ENCODE measurements at regions of chr15 and their contacts with region 1.

Region 1: DNA sequence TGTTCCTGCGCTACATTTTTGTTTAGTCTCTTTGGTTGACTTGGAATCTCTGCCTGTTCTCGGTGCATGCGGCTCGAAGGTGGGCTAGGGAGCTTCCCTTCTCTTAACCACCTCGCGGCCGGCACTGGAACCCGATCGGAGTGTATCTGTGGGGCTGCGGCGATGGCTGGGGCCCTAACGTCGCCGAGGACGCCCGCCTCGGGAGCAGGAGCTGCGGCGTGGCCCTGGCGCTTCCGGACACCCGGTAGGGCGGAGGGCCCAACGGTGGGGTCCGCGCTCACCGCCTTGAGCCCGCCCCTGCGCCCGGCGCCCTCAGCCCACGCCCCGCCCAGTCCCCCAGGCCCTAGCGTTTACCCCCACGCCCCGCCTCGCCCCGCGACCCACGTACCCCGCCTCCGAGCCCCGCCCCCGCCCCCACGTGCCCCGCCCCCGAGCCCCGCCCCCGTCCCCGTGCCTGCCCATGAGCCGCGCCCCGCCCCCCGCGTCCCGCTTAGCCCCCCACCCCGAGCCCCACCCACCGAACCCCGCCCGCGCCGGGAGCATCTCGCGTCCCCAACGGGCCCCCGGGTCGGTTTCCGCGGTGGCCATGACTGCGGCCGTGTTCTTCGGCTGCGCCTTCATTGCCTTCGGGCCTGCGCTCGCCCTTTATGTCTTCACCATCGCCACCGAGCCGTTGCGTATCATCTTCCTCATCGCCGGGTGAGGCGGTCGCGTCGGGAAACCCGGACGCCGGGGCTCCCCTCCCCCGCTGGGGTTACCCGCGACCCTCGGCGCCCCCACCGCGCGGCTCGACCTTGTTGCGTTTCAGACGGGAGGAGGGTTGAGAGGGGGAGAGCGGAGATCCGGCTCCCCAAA is at the start of gene APH1B:
- DNase-seq: peak; percentile 62 to 80 (median 74)
- ATAC-seq: peak; percentile 92
- H3K4me3 ChIP-seq: peak within 1 kb of the TSS; percentile 71
- H3K4me3 Mint-ChIP-seq: peak within 1 kb of the TSS; percentile 78 to 93 (median 89)
- H3K27ac ChIP-seq: peak within 1 kb of the TSS; percentile 96
- H3K27ac Mint-ChIP-seq: peak within 1 kb of the TSS; percentile 75 to 98 (median 86)
- H3K4me1 ChIP-seq: peaks cover 10 to 21% of the 10 kb centered on the region in 2 donors
- H3K4me1 Mint-ChIP-seq: peaks cover 23 to 49% (median 46%) of the 10 kb centered on the region in 7 donors
- H3K27me3 ChIP-seq: no peaks in the 10 kb centered on the region
- H3K27me3 Mint-ChIP-seq: no peaks in the 10 kb centered on the region
- total RNA-seq, gene APH1B: 9.9 to 29.9 (median 17.6) TPM

Region 2: GRCh38 chr15:62647202-62647865 is 629.9 kb before region 1 on chr15:
- CTCF ChIA-PET with region 1: no interaction called
- POLR2A ChIA-PET with region 1: no interaction called
- intact Hi-C with region 1: no loop called
- DNase-seq: no peak
- ATAC-seq: peak; percentile 49
- H3K4me3 ChIP-seq: no peak overlapping the region
- H3K4me3 Mint-ChIP-seq: no peak overlapping the region
- H3K27ac ChIP-seq: no peak overlapping the region
- H3K27ac Mint-ChIP-seq: peak overlapping the region in 1 of 9 donors; percentile 69
- H3K4me1 ChIP-seq: no peaks in the 10 kb centered on the region
- H3K4me1 Mint-ChIP-seq: peaks cover 0 to 1% (median 0%) of the 10 kb centered on the region in 7 donors
- H3K27me3 ChIP-seq: no peaks in the 10 kb centered on the region
- H3K27me3 Mint-ChIP-seq: peaks cover 0 to 17% (median 0%) of the 10 kb centered on the region in 5 donors

Region 3: GRCh38 chr15:63122002-63122893 is 155.0 kb before region 1 on chr15:
- CTCF ChIA-PET with region 1: no interaction called
- POLR2A ChIA-PET with region 1: interaction called, 3 read pairs
- intact Hi-C with region 1: loop called (anchors 1 to 2 kb)
- DNase-seq: peak; percentile 38 to 91 (median 57)
- ATAC-seq: peak; percentile 95
- H3K4me3 ChIP-seq: peak overlapping the region; percentile 75
- H3K4me3 Mint-ChIP-seq: peak overlapping the region; percentile 80 to 95 (median 92)
- H3K27ac ChIP-seq: peak overlapping the region; percentile 80
- H3K27ac Mint-ChIP-seq: peak overlapping the region; percentile 54 to 95 (median 79)
- H3K4me1 ChIP-seq: peaks cover 4 to 8% of the 10 kb centered on the region in 2 donors
- H3K4me1 Mint-ChIP-seq: peaks cover 9 to 29% (median 18%) of the 10 kb centered on the region in 7 donors
- H3K27me3 ChIP-seq: no peaks in the 10 kb centered on the region
- H3K27me3 Mint-ChIP-seq: no peaks in the 10 kb centered on the region

Region 4: GRCh38 chr15:63238796-63239195 is 38.5 kb before region 1 on chr15:
- CTCF ChIA-PET with region 1: no interaction called
- POLR2A ChIA-PET with region 1: interaction called, 5 read pairs
- intact Hi-C with region 1: loop called in 1 of 2 experiments (anchors 2 kb)
- DNase-seq: no peak
- ATAC-seq: peak; percentile 46
- H3K4me3 ChIP-seq: no peak overlapping the region
- H3K4me3 Mint-ChIP-seq: no peak overlapping the region
- H3K27ac ChIP-seq: no peak overlapping the region
- H3K27ac Mint-ChIP-seq: peak overlapping the region in 1 of 9 donors; percentile 59
- H3K4me1 ChIP-seq: peaks cover 19 to 35% of the 10 kb centered on the region in 2 donors
- H3K4me1 Mint-ChIP-seq: peaks cover 44 to 90% (median 74%) of the 10 kb centered on the region in 7 donors
- H3K27me3 ChIP-seq: no peaks in the 10 kb centered on the region
- H3K27me3 Mint-ChIP-seq: no peaks in the 10 kb centered on the region

Region 5: DNA sequence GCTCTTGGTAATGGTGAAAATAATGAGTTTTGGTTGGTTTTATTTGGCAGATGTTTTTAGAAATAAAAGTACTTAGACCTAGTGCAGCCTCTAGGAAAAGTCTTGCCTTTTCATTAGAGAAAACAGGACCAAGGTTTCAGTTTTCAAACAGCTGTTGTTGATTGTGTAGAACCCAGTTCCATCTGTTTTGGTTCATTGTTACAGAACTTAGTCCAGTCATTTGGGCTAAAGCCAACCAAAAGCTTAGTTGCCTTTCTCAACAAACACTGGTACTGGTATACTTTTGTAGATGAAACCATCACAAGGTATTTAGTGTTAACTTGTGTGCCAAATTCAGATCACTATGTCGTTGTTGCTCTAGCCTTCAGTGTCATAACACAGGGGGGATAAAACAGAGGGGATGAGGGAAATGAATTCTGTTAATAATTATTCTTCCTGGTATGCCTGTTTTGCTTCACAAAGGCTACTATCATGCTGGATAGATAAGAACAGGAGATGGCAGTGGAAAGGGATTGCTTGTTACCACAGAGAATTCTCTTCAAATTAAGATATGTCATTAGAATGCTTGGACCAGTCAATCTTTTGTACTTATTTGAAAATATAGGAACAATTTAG is 12.5 kb before region 1 on chr15:
- CTCF ChIA-PET with region 1: no interaction called
- POLR2A ChIA-PET with region 1: interaction called, 4 read pairs
- intact Hi-C with region 1: loop called in 1 of 2 experiments (anchors 1 kb)
- DNase-seq: no peak
- ATAC-seq: no peak
- H3K4me3 ChIP-seq: no peak overlapping the region
- H3K4me3 Mint-ChIP-seq: no peak overlapping the region
- H3K27ac ChIP-seq: no peak overlapping the region
- H3K27ac Mint-ChIP-seq: peak overlapping the region in 4 of 9 donors; percentile 3 to 43 (median 19)
- H3K4me1 ChIP-seq: no peaks in the 10 kb centered on the region
- H3K4me1 Mint-ChIP-seq: peaks cover 0 to 11% (median 6%) of the 10 kb centered on the region in 7 donors
- H3K27me3 ChIP-seq: no peaks in the 10 kb centered on the region
- H3K27me3 Mint-ChIP-seq: no peaks in the 10 kb centered on the region

Region 6: GRCh38 chr15:64361259-64361658 is 1084.0 kb after region 1 on chr15:
- CTCF ChIA-PET with region 1: no interaction called
- POLR2A ChIA-PET with region 1: no interaction called
- intact Hi-C with region 1: no loop called
- DNase-seq: no peak
- ATAC-seq: no peak
- H3K4me3 ChIP-seq: no peak overlapping the region
- H3K4me3 Mint-ChIP-seq: no peak overlapping the region
- H3K27ac ChIP-seq: no peak overlapping the region
- H3K27ac Mint-ChIP-seq: no peak overlapping the region
- H3K4me1 ChIP-seq: no peaks in the 10 kb centered on the region
- H3K4me1 Mint-ChIP-seq: peaks cover 3 to 11% (median 4%) of the 10 kb centered on the region in 7 donors
- H3K27me3 ChIP-seq: no peaks in the 10 kb centered on the region
- H3K27me3 Mint-ChIP-seq: no peaks in the 10 kb centered on the region